B cell (primary cell): ENCODE measurements at regions of chr20 and their contacts with region 1.

Region 1: GRCh38 chr20:51525241-51526129 is 17.0 kb downstream of the NFATC2 start:
- DNase-seq: peak; percentile 69
- ATAC-seq: peak; percentile 66
- H3K4me3 ChIP-seq: peak overlapping the region in 2 of 5 experiments; percentile 2 to 48
- H3K4me3 Mint-ChIP-seq: peak overlapping the region; percentile 80
- H3K27ac ChIP-seq: peak overlapping the region; percentile 70 to 78
- H3K27ac Mint-ChIP-seq: peak overlapping the region; percentile 89
- H3K4me1 ChIP-seq: peaks cover 47 to 60% of the 10 kb centered on the region in 2 donors
- H3K4me1 Mint-ChIP-seq: peaks cover 70% of the 10 kb centered on the region
- H3K27me3 ChIP-seq: no peaks in the 10 kb centered on the region
- H3K27me3 Mint-ChIP-seq: no peaks in the 10 kb centered on the region
- CTCF ChIP-seq: no peak

Region 2: DNA sequence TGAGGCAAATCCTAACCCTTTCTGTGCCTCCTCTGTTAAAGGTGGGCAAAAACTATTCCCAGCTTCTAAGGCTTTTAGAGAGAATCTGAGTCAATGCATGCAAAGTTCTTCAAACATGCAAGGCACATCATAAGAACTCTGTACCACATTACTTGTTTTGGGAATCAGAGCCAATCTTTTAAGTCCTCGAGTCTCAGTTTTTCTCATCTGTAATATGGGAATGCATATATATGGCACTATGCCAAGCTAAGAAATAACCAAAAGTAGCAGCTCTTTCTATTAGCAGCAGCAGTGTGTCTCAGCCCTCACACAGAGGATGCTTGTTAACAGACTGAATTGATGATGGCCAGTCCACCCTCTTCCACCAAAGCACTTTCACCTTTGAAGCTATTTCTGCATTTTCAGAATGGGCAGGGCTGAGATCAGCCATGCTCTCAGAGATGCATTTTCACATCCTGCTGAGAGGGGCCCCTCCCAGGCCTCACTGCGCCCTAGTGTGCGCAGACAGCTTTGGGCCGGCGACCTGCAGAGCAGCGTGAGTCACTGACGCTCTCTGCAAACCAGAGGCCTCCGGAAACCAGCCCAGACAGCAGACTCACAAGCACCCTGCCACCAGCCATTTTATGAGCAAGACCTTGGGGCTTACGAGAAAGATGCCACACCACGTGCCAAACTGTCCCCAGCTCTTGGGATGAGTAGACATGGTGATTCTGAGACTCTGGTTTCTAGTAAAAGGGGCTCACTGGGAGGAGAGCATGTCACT is 121.0 kb before region 1 on chr20:
- CTCF ChIA-PET with region 1: no interaction called
- POLR2A ChIA-PET with region 1: no interaction called
- intact Hi-C with region 1: loop called (anchors 5 kb)
- DNase-seq: peak; percentile 92
- ATAC-seq: peak; percentile 85
- H3K4me3 ChIP-seq: no peak overlapping the region
- H3K4me3 Mint-ChIP-seq: peak overlapping the region; percentile 49
- H3K27ac ChIP-seq: peak overlapping the region; percentile 86 to 97
- H3K27ac Mint-ChIP-seq: peak overlapping the region; percentile 99
- H3K4me1 ChIP-seq: peaks cover 62 to 74% of the 10 kb centered on the region in 2 donors
- H3K4me1 Mint-ChIP-seq: peaks cover 77% of the 10 kb centered on the region
- H3K27me3 ChIP-seq: no peaks in the 10 kb centered on the region
- H3K27me3 Mint-ChIP-seq: no peaks in the 10 kb centered on the region
- CTCF ChIP-seq: no peak

Region 3: DNA sequence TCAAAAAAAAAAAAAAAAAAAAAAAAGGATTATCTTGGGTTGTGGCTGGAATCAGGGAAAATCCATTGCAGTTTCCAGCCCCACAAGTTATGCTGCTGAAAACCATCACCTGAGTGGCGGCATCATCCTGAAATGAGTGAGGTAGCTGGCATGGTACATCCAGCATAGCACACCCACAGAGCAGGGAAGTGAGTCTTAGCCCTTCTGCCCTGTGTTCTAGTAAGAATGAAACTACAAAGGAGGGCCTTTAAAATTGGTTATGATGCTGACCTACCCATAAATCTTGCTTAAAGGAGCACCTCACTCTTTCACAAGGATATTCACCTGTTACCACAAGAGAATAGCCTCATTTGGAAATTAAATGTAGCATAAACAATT is 102.2 kb before region 1 on chr20:
- CTCF ChIA-PET with region 1: no interaction called
- POLR2A ChIA-PET with region 1: interaction called, 12 read pairs
- intact Hi-C with region 1: no loop called
- DNase-seq: peak; percentile 25
- ATAC-seq: peak; percentile 29
- H3K4me3 ChIP-seq: no peak overlapping the region
- H3K4me3 Mint-ChIP-seq: no peak overlapping the region
- H3K27ac ChIP-seq: peak overlapping the region; percentile 73
- H3K27ac Mint-ChIP-seq: peak overlapping the region; percentile 82
- H3K4me1 ChIP-seq: peaks cover 25 to 41% of the 10 kb centered on the region in 2 donors
- H3K4me1 Mint-ChIP-seq: peaks cover 50% of the 10 kb centered on the region
- H3K27me3 ChIP-seq: no peaks in the 10 kb centered on the region
- H3K27me3 Mint-ChIP-seq: no peaks in the 10 kb centered on the region
- CTCF ChIP-seq: no peak

Region 4: DNA sequence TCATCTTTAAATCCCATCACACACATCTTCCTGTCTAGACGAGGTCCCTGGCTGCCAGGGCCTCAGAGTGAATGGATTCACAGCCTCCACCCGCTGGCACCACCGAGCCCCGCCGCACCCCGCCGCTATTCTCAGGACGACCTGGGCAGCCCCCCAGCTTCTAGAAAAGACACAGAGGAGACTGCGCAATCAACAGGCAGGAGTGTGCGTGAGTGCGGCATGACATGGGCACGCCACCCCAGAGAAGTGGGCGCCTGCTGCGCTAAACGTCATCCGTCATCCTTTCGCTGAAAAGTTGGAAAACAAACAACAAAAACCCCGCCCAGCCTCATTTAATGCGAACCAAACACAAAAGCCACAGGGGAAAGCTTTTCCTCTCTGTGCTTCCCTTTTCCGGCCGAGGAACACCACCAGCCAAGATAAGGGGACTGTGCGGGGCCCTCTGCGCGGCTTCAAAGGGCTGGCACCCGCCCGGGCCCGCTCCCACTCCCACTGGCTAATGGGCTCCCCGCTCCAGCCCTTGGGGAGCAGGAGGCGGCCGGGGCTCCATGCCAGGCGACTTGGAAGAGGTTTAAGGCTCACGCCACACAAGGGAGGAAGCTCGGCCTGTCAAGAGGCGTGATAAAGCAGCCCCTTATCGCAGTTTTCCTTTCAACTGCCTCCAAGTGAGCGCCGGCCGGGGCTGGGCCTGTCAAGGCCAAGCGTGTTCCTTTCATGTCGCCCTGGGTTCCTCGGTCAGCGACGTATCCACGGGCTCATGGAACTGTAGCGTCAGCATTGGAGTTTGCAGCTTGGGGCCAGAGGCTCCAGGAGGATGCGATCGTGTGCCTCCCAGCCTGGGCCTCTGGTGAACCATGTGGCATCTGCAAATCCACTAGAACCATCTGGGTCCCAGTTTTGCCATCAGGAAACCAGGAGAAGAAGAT is 33.1 kb before region 1 on chr20:
- CTCF ChIA-PET with region 1: no interaction called
- POLR2A ChIA-PET with region 1: no interaction called
- intact Hi-C with region 1: loop called (anchors 5 kb)
- DNase-seq: no peak
- ATAC-seq: no peak
- H3K4me3 ChIP-seq: no peak overlapping the region
- H3K4me3 Mint-ChIP-seq: peak overlapping the region; percentile 32
- H3K27ac ChIP-seq: no peak overlapping the region
- H3K27ac Mint-ChIP-seq: no peak overlapping the region
- H3K4me1 ChIP-seq: peaks cover 59 to 66% of the 10 kb centered on the region in 2 donors
- H3K4me1 Mint-ChIP-seq: peaks cover 59% of the 10 kb centered on the region
- H3K27me3 ChIP-seq: no peaks in the 10 kb centered on the region
- H3K27me3 Mint-ChIP-seq: no peaks in the 10 kb centered on the region
- CTCF ChIP-seq: no peak

Region 5: GRCh38 chr20:52127309-52127708 is 601.8 kb after region 1 on chr20:
- CTCF ChIA-PET with region 1: no interaction called
- POLR2A ChIA-PET with region 1: no interaction called
- intact Hi-C with region 1: no loop called
- DNase-seq: no peak
- ATAC-seq: no peak
- H3K4me3 ChIP-seq: no peak overlapping the region
- H3K4me3 Mint-ChIP-seq: no peak overlapping the region
- H3K27ac ChIP-seq: no peak overlapping the region
- H3K27ac Mint-ChIP-seq: no peak overlapping the region
- H3K4me1 ChIP-seq: no peaks in the 10 kb centered on the region
- H3K4me1 Mint-ChIP-seq: peaks cover 5% of the 10 kb centered on the region
- H3K27me3 ChIP-seq: no peaks in the 10 kb centered on the region
- H3K27me3 Mint-ChIP-seq: no peaks in the 10 kb centered on the region
- CTCF ChIP-seq: no peak

Region 6: DNA sequence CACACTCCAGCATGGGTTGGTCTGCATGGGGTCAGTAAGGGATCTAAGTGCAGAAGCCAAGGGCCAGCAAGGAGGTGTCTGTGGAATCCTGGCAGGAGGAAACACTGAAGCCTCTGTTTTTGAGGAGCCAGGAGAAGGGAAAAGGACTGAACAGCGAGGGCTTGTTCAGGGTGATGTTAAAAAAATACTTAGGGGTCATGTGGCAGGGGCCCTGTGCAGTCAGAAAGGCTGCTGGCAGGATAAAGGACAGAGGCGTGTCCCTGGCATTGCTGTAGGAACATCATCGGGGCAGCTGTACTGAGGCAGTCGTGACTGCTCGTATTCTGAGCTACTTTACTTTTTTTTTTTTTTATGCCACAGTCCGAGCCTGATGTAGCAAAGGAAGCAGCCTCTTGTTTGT is 793.2 kb after region 1 on chr20:
- CTCF ChIA-PET with region 1: no interaction called
- POLR2A ChIA-PET with region 1: no interaction called
- intact Hi-C with region 1: no loop called
- DNase-seq: no peak
- ATAC-seq: no peak
- H3K4me3 ChIP-seq: no peak overlapping the region
- H3K4me3 Mint-ChIP-seq: no peak overlapping the region
- H3K27ac ChIP-seq: no peak overlapping the region
- H3K27ac Mint-ChIP-seq: no peak overlapping the region
- H3K4me1 ChIP-seq: no peaks in the 10 kb centered on the region
- H3K4me1 Mint-ChIP-seq: no peaks in the 10 kb centered on the region
- H3K27me3 ChIP-seq: no peaks in the 10 kb centered on the region
- H3K27me3 Mint-ChIP-seq: peaks cover 33% of the 10 kb centered on the region
- CTCF ChIP-seq: no peak